Natural killer cell (primary cell): ENCODE measurements at regions of chr14 and their contacts with region 1.

Region 1: GRCh38 chr14:73785873-73786695 is 65.5 kb upstream of the PTGR2 start:
- DNase-seq: peak; percentile 59 to 80
- ATAC-seq: peak; percentile 61 to 75 (median 64)
- H3K4me3 ChIP-seq: peak overlapping the region; percentile 71
- H3K4me3 Mint-ChIP-seq: peak overlapping the region; percentile 96
- H3K27ac ChIP-seq: peak overlapping the region; percentile 85
- H3K27ac Mint-ChIP-seq: peak overlapping the region; percentile 88 to 92
- H3K4me1 ChIP-seq: peaks cover 52% of the 10 kb centered on the region
- H3K4me1 Mint-ChIP-seq: peaks cover 61 to 62% of the 10 kb centered on the region in 2 donors
- H3K27me3 ChIP-seq: no peaks in the 10 kb centered on the region
- H3K27me3 Mint-ChIP-seq: no peaks in the 10 kb centered on the region
- CTCF ChIP-seq: no peak

Region 2: GRCh38 chr14:73753959-73754882 is 31.9 kb before region 1 on chr14:
- intact Hi-C with region 1: loop called (anchors 2 kb)
- DNase-seq: peak in 1 of 2 donors; percentile 71
- ATAC-seq: peak; percentile 11 to 27 (median 13)
- H3K4me3 ChIP-seq: peak overlapping the region; percentile 12
- H3K4me3 Mint-ChIP-seq: peak overlapping the region; percentile 70
- H3K27ac ChIP-seq: peak overlapping the region; percentile 67
- H3K27ac Mint-ChIP-seq: peak overlapping the region; percentile 92 to 96
- H3K4me1 ChIP-seq: peaks cover 98% of the 10 kb centered on the region
- H3K4me1 Mint-ChIP-seq: peaks cover 86 to 100% of the 10 kb centered on the region in 2 donors
- H3K27me3 ChIP-seq: no peaks in the 10 kb centered on the region
- H3K27me3 Mint-ChIP-seq: no peaks in the 10 kb centered on the region
- CTCF ChIP-seq: no peak

Region 3: GRCh38 chr14:73759714-73760597 is 26.1 kb before region 1 on chr14:
- intact Hi-C with region 1: loop called (anchors 1 kb)
- DNase-seq: peak; percentile 96 to 98
- ATAC-seq: peak; percentile 74 to 92 (median 83)
- H3K4me3 ChIP-seq: peak overlapping the region; percentile 38
- H3K4me3 Mint-ChIP-seq: peak overlapping the region; percentile 89
- H3K27ac ChIP-seq: peak overlapping the region; percentile 88
- H3K27ac Mint-ChIP-seq: peak overlapping the region; percentile 96 to 98
- H3K4me1 ChIP-seq: peaks cover 81% of the 10 kb centered on the region
- H3K4me1 Mint-ChIP-seq: peaks cover 69 to 89% of the 10 kb centered on the region in 2 donors
- H3K27me3 ChIP-seq: no peaks in the 10 kb centered on the region
- H3K27me3 Mint-ChIP-seq: no peaks in the 10 kb centered on the region
- CTCF ChIP-seq: no peak

Region 4: GRCh38 chr14:73771848-73772638 is 14.0 kb before region 1 on chr14:
- intact Hi-C with region 1: loop called (anchors 2 kb)
- DNase-seq: peak in 1 of 2 donors; percentile 81
- ATAC-seq: peak; percentile 81 to 83 (median 82)
- H3K4me3 ChIP-seq: no peak overlapping the region
- H3K4me3 Mint-ChIP-seq: peak overlapping the region; percentile 66
- H3K27ac ChIP-seq: peak overlapping the region; percentile 76
- H3K27ac Mint-ChIP-seq: peak overlapping the region; percentile 83 to 89
- H3K4me1 ChIP-seq: peaks cover 62% of the 10 kb centered on the region
- H3K4me1 Mint-ChIP-seq: peaks cover 47 to 54% of the 10 kb centered on the region in 2 donors
- H3K27me3 ChIP-seq: no peaks in the 10 kb centered on the region
- H3K27me3 Mint-ChIP-seq: no peaks in the 10 kb centered on the region
- CTCF ChIP-seq: no peak

Region 5: GRCh38 chr14:73825551-73826188 is 39.6 kb after region 1 on chr14:
- intact Hi-C with region 1: loop called (anchors 5 kb)
- DNase-seq: peak; percentile 64 to 89
- ATAC-seq: peak; percentile 95 to 100 (median 99)
- H3K4me3 ChIP-seq: no peak overlapping the region
- H3K4me3 Mint-ChIP-seq: no peak overlapping the region
- H3K27ac ChIP-seq: no peak overlapping the region
- H3K27ac Mint-ChIP-seq: no peak overlapping the region
- H3K4me1 ChIP-seq: peaks cover 3% of the 10 kb centered on the region
- H3K4me1 Mint-ChIP-seq: peaks cover 0 to 7% of the 10 kb centered on the region in 2 donors
- H3K27me3 ChIP-seq: no peaks in the 10 kb centered on the region
- H3K27me3 Mint-ChIP-seq: no peaks in the 10 kb centered on the region
- CTCF ChIP-seq: peak; percentile 90

Region 6: GRCh38 chr14:73878436-73878835 is 92.4 kb after region 1 on chr14:
- intact Hi-C with region 1: no loop called
- DNase-seq: no peak
- ATAC-seq: no peak
- H3K4me3 ChIP-seq: no peak overlapping the region
- H3K4me3 Mint-ChIP-seq: no peak overlapping the region
- H3K27ac ChIP-seq: no peak overlapping the region
- H3K27ac Mint-ChIP-seq: no peak overlapping the region
- H3K4me1 ChIP-seq: no peaks in the 10 kb centered on the region
- H3K4me1 Mint-ChIP-seq: no peaks in the 10 kb centered on the region
- H3K27me3 ChIP-seq: no peaks in the 10 kb centered on the region
- H3K27me3 Mint-ChIP-seq: no peaks in the 10 kb centered on the region
- CTCF ChIP-seq: no peak